BJ (cell line): ENCODE measurements at regions of chr1 and their contacts with region 1.

Region 1: GRCh38 chr1:166910396-166910994 is 34.4 kb upstream of the TADA1 start:
- DNase-seq: peak; percentile 19
- H3K4me3 ChIP-seq: no peak overlapping the region
- H3K27me3 ChIP-seq: no peaks in the 10 kb centered on the region
- CTCF ChIP-seq: peak; percentile 59

Region 2: GRCh38 chr1:166884040-166884642 is 26.4 kb before region 1 on chr1:
- CTCF ChIA-PET with region 1: interaction called, 20 read pairs
- POLR2A ChIA-PET with region 1: no interaction called
- DNase-seq: no peak
- H3K4me3 ChIP-seq: no peak overlapping the region
- H3K27me3 ChIP-seq: peaks cover 8% of the 10 kb centered on the region
- CTCF ChIP-seq: peak; percentile 65

Region 3: DNA sequence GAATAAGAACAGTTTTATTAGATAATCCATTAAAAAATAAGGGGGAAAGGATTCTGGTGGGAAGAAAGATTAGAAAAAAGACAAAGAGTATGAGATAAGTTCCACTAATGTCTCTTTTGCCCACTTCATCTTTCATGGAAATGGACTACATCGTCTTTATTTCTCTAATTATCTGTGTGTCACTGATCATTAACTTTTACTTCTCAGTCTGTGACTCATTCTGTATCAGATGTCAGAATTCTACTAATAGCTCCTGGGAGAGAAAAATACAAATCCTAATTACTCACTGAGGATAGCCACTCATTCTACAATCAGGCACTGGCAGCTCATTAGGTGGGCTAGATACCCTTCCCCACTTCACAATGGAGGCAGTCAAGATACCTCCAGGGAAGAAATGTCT is 23.1 kb after region 1 on chr1:
- CTCF ChIA-PET with region 1: no interaction called
- POLR2A ChIA-PET with region 1: no interaction called
- DNase-seq: no peak
- H3K4me3 ChIP-seq: no peak overlapping the region
- H3K27me3 ChIP-seq: peaks cover 8% of the 10 kb centered on the region
- CTCF ChIP-seq: no peak

Region 4: DNA sequence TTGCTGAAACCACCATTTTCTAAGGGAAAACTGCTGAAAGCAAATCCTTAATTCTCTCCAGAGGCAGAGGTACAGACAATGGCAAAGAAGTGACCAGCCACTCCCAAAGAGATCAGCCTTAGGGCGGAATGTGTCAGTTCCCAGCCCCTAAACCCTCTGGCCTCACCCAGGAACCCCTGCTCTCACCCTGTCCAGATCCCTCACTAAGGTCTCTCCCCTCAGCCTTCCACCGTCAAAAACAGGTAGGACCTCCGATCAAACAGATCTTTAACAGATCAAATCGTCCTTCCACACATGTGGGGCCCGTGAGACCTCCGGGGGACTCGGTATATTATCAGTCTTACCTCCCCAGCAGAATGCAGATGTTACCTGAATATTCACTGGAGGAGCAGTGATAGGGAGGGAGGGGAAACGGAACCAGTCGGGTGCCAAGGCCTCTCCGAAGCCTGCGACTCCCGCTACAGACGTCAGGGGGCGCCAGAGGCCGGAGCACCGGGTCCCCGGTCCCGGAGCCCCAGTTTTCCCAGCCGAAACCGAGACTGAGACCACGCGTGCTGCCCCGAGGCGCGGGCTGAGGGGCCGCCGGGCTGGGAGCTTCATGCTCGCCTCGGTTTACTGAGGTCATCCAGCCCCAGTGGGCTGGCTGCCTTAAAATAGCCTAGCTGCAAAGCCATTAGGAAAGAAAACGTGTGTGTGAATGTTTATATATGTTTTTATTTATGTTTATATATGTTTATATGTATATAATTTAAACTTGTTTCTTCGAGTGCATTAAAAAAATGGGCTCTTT is 156.0 kb after region 1 on chr1:
- CTCF ChIA-PET with region 1: interaction called, 343 read pairs
- POLR2A ChIA-PET with region 1: no interaction called
- DNase-seq: no peak
- H3K4me3 ChIP-seq: no peak overlapping the region
- H3K27me3 ChIP-seq: no peaks in the 10 kb centered on the region
- CTCF ChIP-seq: peak; percentile 96